ENCODE measurements at regions of chr5 and their contacts with region 1.

Region 1: DNA sequence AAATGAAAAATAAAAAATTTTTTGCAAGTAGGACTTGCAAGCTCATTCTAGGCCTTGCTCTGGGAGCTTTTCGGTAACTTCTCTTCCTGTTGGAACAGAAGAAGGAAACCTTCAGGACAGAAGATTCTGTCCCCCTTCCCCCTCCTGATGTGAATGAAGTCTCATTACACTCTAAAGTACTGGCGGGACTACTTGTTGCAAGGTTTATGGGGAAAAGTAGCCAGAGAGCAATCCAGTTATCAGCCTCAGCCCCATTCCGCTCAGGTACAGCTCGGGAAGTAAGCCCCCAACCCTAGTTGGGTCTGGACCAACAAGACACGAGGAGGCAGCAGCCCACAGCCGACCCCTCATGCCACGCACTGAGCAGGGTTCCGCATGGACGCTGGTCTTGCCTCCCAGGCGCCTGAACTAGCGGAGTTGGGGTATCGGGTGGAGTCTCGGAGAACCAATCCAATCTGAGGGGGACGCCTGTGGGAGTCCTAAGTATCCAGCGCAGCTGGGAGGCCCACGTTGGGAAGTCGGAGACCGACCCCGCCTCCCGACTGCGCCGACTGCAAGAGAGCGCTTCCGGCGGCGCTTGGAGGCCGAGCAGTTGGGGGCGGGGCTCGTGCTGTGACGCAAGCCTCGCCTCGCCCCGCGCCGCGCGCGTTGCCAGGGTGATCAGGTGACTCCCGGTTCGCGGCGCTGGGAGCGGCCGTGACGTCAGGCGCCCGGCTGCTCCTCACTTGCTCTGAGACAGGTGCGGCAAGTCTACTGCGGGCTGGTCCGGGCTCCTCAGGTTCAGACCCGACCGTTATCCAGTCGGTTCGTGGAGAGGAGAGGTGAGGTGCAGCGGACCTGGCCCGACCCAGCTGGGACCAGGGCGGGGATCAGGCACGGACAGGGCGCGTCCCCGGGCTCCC is at the start of gene CYSTM1:
- DNase-seq: peak; percentile 97
- ATAC-seq: peak; percentile 86
- H3K4me3 ChIP-seq: peak within 1 kb of the TSS; percentile 85
- H3K27ac ChIP-seq: peak within 1 kb of the TSS; percentile 59
- H3K4me1 ChIP-seq: peaks cover 29% of the 10 kb centered on the region
- H3K27me3 ChIP-seq: no peaks in the 10 kb centered on the region
- CTCF ChIP-seq: no peak
- total RNA-seq, gene CYSTM1: 24.3 and 43.3 TPM in 2 replicates

Region 2: DNA sequence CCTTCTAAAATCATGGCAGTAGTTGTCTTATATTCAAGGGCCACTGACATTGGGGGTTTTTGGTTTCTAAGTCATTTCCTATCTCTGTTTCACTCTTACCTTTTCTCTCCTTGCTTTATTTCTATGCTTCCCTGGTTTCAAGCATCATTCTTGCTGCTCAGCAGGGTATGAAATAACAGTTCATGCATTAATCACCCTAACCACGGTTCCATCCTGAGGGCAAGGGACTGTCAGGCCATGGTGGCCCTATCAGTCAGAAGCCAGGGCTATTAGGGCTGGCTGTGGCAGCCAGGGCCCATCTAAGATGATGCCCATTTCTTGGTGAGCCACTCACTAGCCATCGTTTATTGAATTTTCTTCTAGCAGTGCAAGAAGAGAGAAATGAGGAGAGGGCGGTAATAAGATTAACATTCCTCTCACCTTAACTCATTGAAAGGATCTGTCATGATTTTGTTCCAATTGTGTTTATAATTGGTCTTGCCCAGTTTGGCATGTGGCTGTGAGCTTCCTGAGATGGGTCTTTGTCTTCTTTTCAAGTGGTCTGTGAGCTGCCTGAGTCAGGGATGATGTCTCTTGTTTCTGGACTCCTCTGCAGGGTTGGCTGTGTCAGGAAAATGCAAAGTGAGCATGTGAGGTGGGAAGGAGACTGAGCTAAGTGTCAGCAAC is 45.4 kb after region 1 on chr5:
- CTCF ChIA-PET with region 1: no interaction called
- POLR2A ChIA-PET with region 1: no interaction called
- intact Hi-C with region 1: loop called (anchors 5 kb)
- DNase-seq: peak; percentile 25
- ATAC-seq: peak; percentile 24; the same call in 1 of the 2 replicates
- H3K4me3 ChIP-seq: no peak overlapping the region
- H3K27ac ChIP-seq: no peak overlapping the region
- H3K4me1 ChIP-seq: peaks cover 40% of the 10 kb centered on the region
- H3K27me3 ChIP-seq: no peaks in the 10 kb centered on the region
- CTCF ChIP-seq: no peak

Region 3: DNA sequence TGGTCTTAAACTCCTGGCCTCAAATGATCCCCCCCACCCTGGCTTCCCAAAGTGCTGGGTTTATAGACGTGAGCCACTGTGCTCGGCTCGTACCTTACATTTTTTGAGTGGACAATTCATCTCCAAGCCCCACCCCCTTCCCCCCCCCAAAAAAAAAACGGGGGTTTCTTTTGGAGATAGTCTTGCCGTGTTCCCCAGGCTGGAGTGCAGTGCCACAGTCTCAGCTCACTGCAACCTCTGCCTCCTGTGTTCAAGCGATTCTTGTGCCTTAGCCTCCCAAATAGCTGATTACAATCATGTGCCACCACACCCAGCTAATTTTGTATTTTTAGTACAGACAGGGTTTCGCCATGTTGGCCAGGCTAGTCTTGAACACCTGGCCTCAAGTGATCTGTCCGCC is 258.2 kb after region 1 on chr5:
- CTCF ChIA-PET with region 1: no interaction called
- POLR2A ChIA-PET with region 1: no interaction called
- intact Hi-C with region 1: no loop called
- DNase-seq: no peak
- ATAC-seq: no peak
- H3K4me3 ChIP-seq: no peak overlapping the region
- H3K27ac ChIP-seq: no peak overlapping the region
- H3K4me1 ChIP-seq: no peaks in the 10 kb centered on the region
- H3K27me3 ChIP-seq: no peaks in the 10 kb centered on the region
- CTCF ChIP-seq: no peak